ENCODE measurements at regions of chr10 and their contacts with region 1.

Region 1: GRCh38 chr10:71569775-71570588 is 149.6 kb downstream of the C10orf105 start:
- DNase-seq: peak; percentile 51 to 63 (median 63)
- H3K4me3 ChIP-seq: no peak overlapping the region
- H3K4me3 Mint-ChIP-seq: no peak overlapping the region
- H3K27ac ChIP-seq: no peak overlapping the region
- H3K27ac Mint-ChIP-seq: no peak overlapping the region
- H3K4me1 ChIP-seq: no peaks in the 10 kb centered on the region
- H3K4me1 Mint-ChIP-seq: no peaks in the 10 kb centered on the region
- H3K27me3 ChIP-seq: no peaks in the 10 kb centered on the region
- H3K27me3 Mint-ChIP-seq: peaks cover 1 to 3% (median 1%) of the 10 kb centered on the region in 3 donors
- CTCF ChIP-seq: peak; percentile 88

Region 2: DNA sequence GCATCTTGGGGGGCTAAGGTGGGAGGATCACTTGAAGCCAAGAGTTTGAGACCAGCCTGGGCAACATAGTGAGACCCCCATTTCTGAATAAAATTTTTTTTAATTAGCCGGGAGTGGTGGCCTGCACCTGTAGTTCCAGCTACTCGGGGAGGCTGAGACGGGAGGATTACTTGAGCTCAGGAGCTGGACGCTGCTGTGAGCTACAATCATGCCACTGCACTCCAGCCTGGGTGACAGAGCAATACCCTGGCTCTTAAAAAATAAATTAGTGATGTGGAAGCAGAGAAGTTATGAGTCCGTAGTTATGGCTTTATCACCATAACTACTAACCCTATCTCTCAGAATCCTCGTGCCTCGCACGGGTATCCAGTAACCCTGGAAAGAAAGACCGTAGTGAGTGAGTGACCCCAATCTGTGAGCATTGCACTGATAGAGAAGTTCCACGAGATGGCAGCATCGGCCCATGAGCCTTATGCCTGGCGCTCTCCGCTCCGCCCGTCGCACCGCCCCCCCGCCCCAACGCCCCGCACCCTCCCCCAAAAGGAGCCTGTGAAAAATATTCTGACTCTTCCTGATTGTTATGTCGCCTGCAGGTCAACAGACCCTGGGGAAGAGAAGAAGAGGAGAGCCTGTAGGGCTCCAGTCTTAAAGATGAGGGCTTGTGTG is 255.8 kb before region 1 on chr10:
- intact Hi-C with region 1: loop called (anchors 1 to 5 kb)
- DNase-seq: peak; percentile 42 to 64 (median 62)
- H3K4me3 ChIP-seq: peak overlapping the region in 1 of 3 experiments; percentile 22
- H3K4me3 Mint-ChIP-seq: no peak overlapping the region
- H3K27ac ChIP-seq: no peak overlapping the region
- H3K27ac Mint-ChIP-seq: peak overlapping the region in 1 of 7 donors; percentile 46
- H3K4me1 ChIP-seq: peaks cover 37 to 40% of the 10 kb centered on the region in 2 donors
- H3K4me1 Mint-ChIP-seq: peaks cover 47% of the 10 kb centered on the region
- H3K27me3 ChIP-seq: no peaks in the 10 kb centered on the region
- H3K27me3 Mint-ChIP-seq: peaks cover 0 to 10% (median 3%) of the 10 kb centered on the region in 3 donors
- CTCF ChIP-seq: peak; percentile 91

Region 3: GRCh38 chr10:71383972-71384687 is 185.9 kb before region 1 on chr10:
- intact Hi-C with region 1: loop called (anchors 2 to 5 kb)
- DNase-seq: peak; percentile 61 to 77 (median 73)
- H3K4me3 ChIP-seq: no peak overlapping the region
- H3K4me3 Mint-ChIP-seq: no peak overlapping the region
- H3K27ac ChIP-seq: no peak overlapping the region
- H3K27ac Mint-ChIP-seq: peak overlapping the region in 4 of 7 donors; percentile 3 to 93 (median 61)
- H3K4me1 ChIP-seq: peaks cover 38 to 41% of the 10 kb centered on the region in 2 donors
- H3K4me1 Mint-ChIP-seq: peaks cover 24% of the 10 kb centered on the region
- H3K27me3 ChIP-seq: no peaks in the 10 kb centered on the region
- H3K27me3 Mint-ChIP-seq: peaks cover 0 to 4% (median 2%) of the 10 kb centered on the region in 3 donors
- CTCF ChIP-seq: peak; percentile 94

Region 4: GRCh38 chr10:71390461-71390835 is 179.5 kb before region 1 on chr10:
- intact Hi-C with region 1: loop called (anchors 2 to 5 kb)
- DNase-seq: no peak
- H3K4me3 ChIP-seq: no peak overlapping the region
- H3K4me3 Mint-ChIP-seq: peak overlapping the region in 1 of 2 donors; percentile 27
- H3K27ac ChIP-seq: no peak overlapping the region
- H3K27ac Mint-ChIP-seq: no peak overlapping the region
- H3K4me1 ChIP-seq: no peaks in the 10 kb centered on the region
- H3K4me1 Mint-ChIP-seq: peaks cover 5% of the 10 kb centered on the region
- H3K27me3 ChIP-seq: peaks cover under 1 to 14% of the 10 kb centered on the region in 2 donors
- H3K27me3 Mint-ChIP-seq: peaks cover 19 to 24% (median 23%) of the 10 kb centered on the region in 3 donors
- CTCF ChIP-seq: no peak

Measured in CD14-positive monocyte (primary cell).